ENCODE measurements at regions of chr21 and their contacts with region 1.

Region 1: GRCh38 chr21:20728691-20729090 is 269.5 kb upstream of the NCAM2 start:
- DNase-seq: no peak
- H3K4me3 ChIP-seq: no peak overlapping the region
- H3K27ac ChIP-seq: no peak overlapping the region
- H3K4me1 ChIP-seq: no peaks in the 10 kb centered on the region
- H3K27me3 ChIP-seq: no peaks in the 10 kb centered on the region; a peak in 1 of 7 replicates
- CTCF ChIP-seq: no peak
- EP300 ChIP-seq: no peak
- POLR2A ChIP-seq: no peak
- RAD21 ChIP-seq: no peak

Region 2: GRCh38 chr21:20739421-20739820 is 10.7 kb after region 1 on chr21:
- CTCF ChIA-PET with region 1: interaction called, 11 read pairs
- POLR2A ChIA-PET with region 1: no interaction called
- DNase-seq: no peak
- H3K4me3 ChIP-seq: no peak overlapping the region
- H3K27ac ChIP-seq: no peak overlapping the region
- H3K4me1 ChIP-seq: 0 out of 7 replicates have a peak, but pooled peaks cover 0 to 2% (median 0%) of the 10 kb centered on the region in 4 experiments
- H3K27me3 ChIP-seq: peaks cover 0 to 1% (median 0%) of the 10 kb centered on the region in 4 experiments; a peak in 1 of 7 replicates
- CTCF ChIP-seq: peak; percentile 51 to 60 (median 58)
- EP300 ChIP-seq: no peak
- POLR2A ChIP-seq: no peak
- RAD21 ChIP-seq: peak; percentile 47 to 69